ENCODE measurements at regions of chr15 and their contacts with region 1.

Region 1: GRCh38 chr15:48810414-48811317 is at the start of gene CEP152:
- DNase-seq: peak; percentile 99
- ATAC-seq: peak; percentile 95
- H3K4me3 ChIP-seq: peak within 1 kb of the TSS; percentile 86 to 97 (median 94)
- H3K4me3 Mint-ChIP-seq: peak within 1 kb of the TSS; percentile 95
- H3K27ac ChIP-seq: peak within 1 kb of the TSS; percentile 74 to 76
- H3K27ac Mint-ChIP-seq: peak within 1 kb of the TSS; percentile 86
- H3K4me1 ChIP-seq: peaks cover 15 to 18% of the 10 kb centered on the region in 2 donors
- H3K4me1 Mint-ChIP-seq: peaks cover 30% of the 10 kb centered on the region
- H3K27me3 ChIP-seq: peaks cover 0 to 7% (median 0%) of the 10 kb centered on the region in 4 experiments
- H3K27me3 Mint-ChIP-seq: peaks cover 4% of the 10 kb centered on the region
- CTCF ChIP-seq: no peak
- total RNA-seq, gene CEP152: 18.0 and 18.1 TPM in 2 replicates

Region 2: DNA sequence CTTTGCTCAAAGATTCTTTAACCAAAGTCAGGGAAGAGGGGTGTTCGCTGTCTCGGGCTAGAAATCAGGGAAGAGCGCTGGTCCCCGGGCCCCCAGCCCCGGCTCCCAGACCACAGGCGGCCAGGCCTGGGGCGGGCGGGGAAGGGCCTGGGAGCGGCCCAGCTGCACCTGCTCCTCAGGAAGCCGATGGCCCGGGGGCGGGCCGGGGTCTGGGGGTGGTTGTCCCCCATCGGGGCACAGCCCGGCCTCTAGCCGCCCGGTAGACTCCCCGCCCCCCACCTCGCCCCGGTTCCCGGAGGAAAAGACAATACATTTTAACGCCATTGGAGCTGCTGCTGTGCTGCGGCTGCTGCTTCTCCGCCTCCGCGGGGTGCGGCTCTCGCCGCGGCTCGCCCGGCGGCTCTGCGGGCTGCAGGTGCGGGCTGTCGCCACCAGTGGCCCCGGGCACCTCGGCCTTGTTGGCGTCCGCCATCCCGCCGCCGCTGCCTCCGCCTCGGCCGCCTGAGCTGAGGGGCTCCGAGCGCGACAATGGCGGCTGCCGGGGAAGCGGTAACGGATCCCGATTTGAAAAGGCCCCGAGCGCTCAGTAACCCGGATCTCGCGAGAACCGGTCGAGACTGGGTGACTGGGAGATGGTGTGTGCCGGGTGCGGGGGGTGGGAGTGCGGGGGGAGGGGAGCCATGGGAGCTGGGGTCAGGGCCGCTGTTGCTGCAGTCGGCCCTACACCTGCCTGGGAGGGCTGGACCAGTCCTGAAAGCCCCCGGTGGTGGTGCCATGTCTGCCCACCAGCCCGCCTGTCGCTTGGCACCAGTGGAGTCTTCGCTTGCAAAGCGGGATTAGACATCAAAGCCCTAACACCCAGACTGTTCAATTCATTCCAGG is 632.7 kb before region 1 on chr15 and contains the start of gene MYEF2:
- CTCF ChIA-PET with region 1: no interaction called
- POLR2A ChIA-PET with region 1: no interaction called
- intact Hi-C with region 1: loop called (anchors 5 kb)
- DNase-seq: peak; percentile 80
- ATAC-seq: peak; percentile 72
- H3K4me3 ChIP-seq: peak within 1 kb of the TSS; percentile 47 to 71 (median 67)
- H3K4me3 Mint-ChIP-seq: peak within 1 kb of the TSS; percentile 95
- H3K27ac ChIP-seq: peak within 1 kb of the TSS; percentile 21 to 81
- H3K27ac Mint-ChIP-seq: peak within 1 kb of the TSS; percentile 92
- H3K4me1 ChIP-seq: peaks cover 8 to 11% of the 10 kb centered on the region in 2 donors
- H3K4me1 Mint-ChIP-seq: peaks cover 18% of the 10 kb centered on the region
- H3K27me3 ChIP-seq: peaks cover 0 to 5% (median 2%) of the 10 kb centered on the region in 4 experiments
- H3K27me3 Mint-ChIP-seq: peaks cover 17% of the 10 kb centered on the region
- CTCF ChIP-seq: peak; percentile 35
- total RNA-seq, gene MYEF2: 34.3 and 36.3 TPM in 2 replicates

Region 3: DNA sequence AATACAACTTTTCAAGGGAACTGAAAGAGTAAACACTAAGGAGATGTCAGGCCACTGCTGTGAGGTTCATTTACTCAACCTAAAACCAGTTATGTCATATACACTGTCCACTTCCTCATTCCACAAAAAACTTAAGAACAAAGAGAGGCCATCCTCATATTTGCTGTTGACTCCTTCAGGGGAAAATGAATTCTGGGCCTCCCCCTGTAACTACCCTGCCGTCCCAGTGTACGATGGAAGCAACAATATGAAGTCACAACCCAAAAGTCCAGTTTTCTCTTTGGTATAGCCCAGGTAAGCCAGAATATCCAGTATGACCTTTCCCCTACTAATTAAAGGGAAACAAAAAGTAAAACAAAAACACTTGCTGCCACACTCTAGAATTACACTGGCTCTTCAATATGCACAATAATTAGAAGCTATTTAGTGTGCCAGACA is 15.9 kb before region 1 on chr15:
- CTCF ChIA-PET with region 1: interaction called, 22 read pairs
- POLR2A ChIA-PET with region 1: interaction called, 3 read pairs
- intact Hi-C with region 1: loop called (anchors 2 kb)
- DNase-seq: peak; percentile 74
- ATAC-seq: peak; percentile 87
- H3K4me3 ChIP-seq: peak overlapping the region in 3 of 5 experiments; percentile 2 to 14 (median 13)
- H3K4me3 Mint-ChIP-seq: peak overlapping the region; percentile 84
- H3K27ac ChIP-seq: peak overlapping the region; percentile 68 to 72
- H3K27ac Mint-ChIP-seq: peak overlapping the region; percentile 98
- H3K4me1 ChIP-seq: peaks cover 5 to 8% of the 10 kb centered on the region in 2 donors
- H3K4me1 Mint-ChIP-seq: peaks cover 22% of the 10 kb centered on the region
- H3K27me3 ChIP-seq: no peaks in the 10 kb centered on the region
- H3K27me3 Mint-ChIP-seq: no peaks in the 10 kb centered on the region
- CTCF ChIP-seq: no peak

Region 4: DNA sequence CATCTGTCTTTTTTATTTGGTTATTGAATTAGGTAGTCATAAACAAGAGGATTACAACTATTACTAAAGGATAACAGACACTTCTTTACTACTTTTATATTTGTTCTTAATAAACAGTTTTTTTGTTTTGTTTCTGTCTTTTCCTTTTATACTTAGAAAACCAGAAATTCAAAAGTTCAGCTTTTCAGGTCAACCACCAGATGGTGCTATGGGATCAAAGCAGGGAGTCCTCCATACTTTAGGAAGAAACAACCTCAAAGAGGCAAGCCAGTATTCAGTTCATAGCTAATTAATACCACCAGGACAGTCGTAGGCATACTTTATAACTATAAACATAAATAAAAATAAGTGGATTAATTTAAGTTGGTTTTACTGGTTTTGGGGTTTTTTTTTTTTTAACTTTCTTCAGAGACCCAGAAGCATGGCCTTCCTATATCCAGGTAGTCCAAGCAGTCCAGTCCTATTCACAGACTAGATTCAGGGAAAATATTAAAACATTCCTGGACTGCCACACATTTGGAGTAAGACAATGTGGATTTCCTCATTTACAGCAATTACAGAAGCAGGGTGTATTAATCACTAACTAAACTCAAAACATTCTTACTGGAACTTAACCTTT is 51.3 kb after region 1 on chr15:
- CTCF ChIA-PET with region 1: no interaction called
- POLR2A ChIA-PET with region 1: no interaction called
- intact Hi-C with region 1: no loop called
- DNase-seq: peak; percentile 71
- ATAC-seq: peak; percentile 58
- H3K4me3 ChIP-seq: no peak overlapping the region
- H3K4me3 Mint-ChIP-seq: no peak overlapping the region
- H3K27ac ChIP-seq: no peak overlapping the region
- H3K27ac Mint-ChIP-seq: no peak overlapping the region
- H3K4me1 ChIP-seq: no peaks in the 10 kb centered on the region
- H3K4me1 Mint-ChIP-seq: no peaks in the 10 kb centered on the region
- H3K27me3 ChIP-seq: no peaks in the 10 kb centered on the region
- H3K27me3 Mint-ChIP-seq: peaks cover 17% of the 10 kb centered on the region
- CTCF ChIP-seq: peak; percentile 94

Region 5: GRCh38 chr15:49155110-49155833 is 344.6 kb after region 1 on chr15 and contains the start of gene COPS2:
- CTCF ChIA-PET with region 1: no interaction called
- POLR2A ChIA-PET with region 1: no interaction called
- intact Hi-C with region 1: loop called (anchors 1 kb)
- DNase-seq: peak; percentile 97
- ATAC-seq: peak; percentile 93
- H3K4me3 ChIP-seq: peak within 1 kb of the TSS; percentile 80 to 99 (median 90)
- H3K4me3 Mint-ChIP-seq: peak within 1 kb of the TSS; percentile 98
- H3K27ac ChIP-seq: peak within 1 kb of the TSS; percentile 92 to 94
- H3K27ac Mint-ChIP-seq: peak within 1 kb of the TSS; percentile 96
- H3K4me1 ChIP-seq: peaks cover 11 to 25% of the 10 kb centered on the region in 2 donors
- H3K4me1 Mint-ChIP-seq: peaks cover 41% of the 10 kb centered on the region
- H3K27me3 ChIP-seq: no peaks in the 10 kb centered on the region
- H3K27me3 Mint-ChIP-seq: no peaks in the 10 kb centered on the region
- CTCF ChIP-seq: peak; percentile 9
- total RNA-seq, gene COPS2: 44.5 and 47.8 TPM in 2 replicates

Region 6: DNA sequence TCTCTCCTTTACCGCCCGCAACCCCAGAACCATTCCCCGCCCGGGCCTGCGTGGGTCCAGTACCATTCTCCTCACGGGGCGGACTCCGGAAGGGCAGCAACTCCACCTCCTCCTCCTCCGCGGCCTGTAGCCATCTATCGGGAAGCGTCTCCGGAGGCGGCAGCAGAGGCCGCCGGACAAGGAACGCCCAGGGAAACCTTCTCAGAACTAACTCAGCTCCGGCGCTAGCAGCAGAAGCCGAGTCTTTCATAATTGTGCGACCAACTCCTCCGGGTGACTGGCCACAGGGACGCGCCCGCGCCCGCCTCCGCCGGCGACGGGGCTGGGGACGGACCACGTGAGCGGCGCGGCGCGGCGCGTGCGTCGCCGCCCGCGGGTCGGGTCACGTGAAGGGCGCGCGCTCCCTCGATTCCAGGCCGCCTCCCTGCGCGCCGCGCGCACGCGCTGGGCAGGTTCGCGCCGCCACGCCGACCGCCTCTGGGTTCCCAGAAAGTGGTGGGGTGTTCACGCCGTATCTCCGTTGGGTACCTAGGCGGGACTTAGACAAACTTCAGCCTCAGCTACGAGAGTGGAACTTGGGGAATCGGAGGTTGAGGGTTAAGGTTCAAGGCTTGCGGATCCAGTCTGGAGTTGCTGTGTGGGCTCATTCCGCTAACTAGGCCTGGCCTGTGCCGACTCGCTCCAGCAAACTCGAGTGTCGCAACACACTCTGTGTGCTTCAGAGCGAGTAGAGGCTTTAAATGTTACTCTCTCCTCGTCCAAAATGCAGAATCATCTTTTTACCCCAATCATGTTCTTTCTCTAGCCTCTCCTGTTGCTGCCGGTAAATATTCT is 1876.0 kb after region 1 on chr15 and contains the start of gene TRPM7:
- CTCF ChIA-PET with region 1: no interaction called
- POLR2A ChIA-PET with region 1: no interaction called
- intact Hi-C with region 1: loop called (anchors 10 kb)
- DNase-seq: peak; percentile 97
- ATAC-seq: peak; percentile 81
- H3K4me3 ChIP-seq: peak within 1 kb of the TSS; percentile 74 to 100 (median 96)
- H3K4me3 Mint-ChIP-seq: peak within 1 kb of the TSS; percentile 100
- H3K27ac ChIP-seq: peak within 1 kb of the TSS; percentile 98 to 100
- H3K27ac Mint-ChIP-seq: peak within 1 kb of the TSS; percentile 99
- H3K4me1 ChIP-seq: peaks cover 19 to 24% of the 10 kb centered on the region in 2 donors
- H3K4me1 Mint-ChIP-seq: peaks cover 46% of the 10 kb centered on the region
- H3K27me3 ChIP-seq: no peaks in the 10 kb centered on the region
- H3K27me3 Mint-ChIP-seq: no peaks in the 10 kb centered on the region
- CTCF ChIP-seq: no peak
- total RNA-seq, gene TRPM7: 77.2 and 86.4 TPM in 2 replicates